Heart left ventricle (tissue), 16 donors: ENCODE measurements at regions of chr5 and their contacts with region 1.

Region 1: GRCh38 chr5:172293054-172293744 is 9.6 kb upstream of the UBTD2 start:
- DNase-seq: peak in 4 of 5 donors; percentile 64 to 73 (median 66)
- ATAC-seq: peak; percentile 91 to 98 (median 97)
- H3K4me3 ChIP-seq: no peak overlapping the region
- H3K27ac ChIP-seq: no peak overlapping the region
- H3K4me1 ChIP-seq: peaks cover 0 to 6% (median 0%) of the 10 kb centered on the region in 12 donors
- H3K27me3 ChIP-seq: no peaks in the 10 kb centered on the region
- CTCF ChIP-seq: peak; percentile 67 to 90 (median 81)
- POLR2A ChIP-seq: no peak

Region 2: GRCh38 chr5:172194985-172195774 is 98.0 kb before region 1 on chr5:
- intact Hi-C with region 1: loop called in 1 of 10 experiments (anchors 10 kb)
- DNase-seq: no peak
- ATAC-seq: no peak
- H3K4me3 ChIP-seq: no peak overlapping the region
- H3K27ac ChIP-seq: no peak overlapping the region
- H3K4me1 ChIP-seq: peaks cover 0 to 5% (median 0%) of the 10 kb centered on the region in 12 donors
- H3K27me3 ChIP-seq: no peaks in the 10 kb centered on the region
- CTCF ChIP-seq: no peak
- POLR2A ChIP-seq: no peak

Region 3: GRCh38 chr5:172255444-172255843 is 37.8 kb before region 1 on chr5:
- intact Hi-C with region 1: no loop called
- DNase-seq: no peak
- ATAC-seq: no peak
- H3K4me3 ChIP-seq: no peak overlapping the region
- H3K27ac ChIP-seq: no peak overlapping the region
- H3K4me1 ChIP-seq: peaks cover 0 to 5% (median 0%) of the 10 kb centered on the region in 12 donors
- H3K27me3 ChIP-seq: no peaks in the 10 kb centered on the region
- CTCF ChIP-seq: no peak
- POLR2A ChIP-seq: no peak

Region 4: GRCh38 chr5:172315587-172316493 is 22.6 kb after region 1 on chr5:
- intact Hi-C with region 1: no loop called
- DNase-seq: no peak
- ATAC-seq: no peak
- H3K4me3 ChIP-seq: no peak overlapping the region
- H3K27ac ChIP-seq: no peak overlapping the region
- H3K4me1 ChIP-seq: peaks cover 0 to 5% (median 0%) of the 10 kb centered on the region in 12 donors
- H3K27me3 ChIP-seq: no peaks in the 10 kb centered on the region
- CTCF ChIP-seq: no peak
- POLR2A ChIP-seq: no peak